ENCODE measurements at regions of chr19 and their contacts with region 1.

Region 1: DNA sequence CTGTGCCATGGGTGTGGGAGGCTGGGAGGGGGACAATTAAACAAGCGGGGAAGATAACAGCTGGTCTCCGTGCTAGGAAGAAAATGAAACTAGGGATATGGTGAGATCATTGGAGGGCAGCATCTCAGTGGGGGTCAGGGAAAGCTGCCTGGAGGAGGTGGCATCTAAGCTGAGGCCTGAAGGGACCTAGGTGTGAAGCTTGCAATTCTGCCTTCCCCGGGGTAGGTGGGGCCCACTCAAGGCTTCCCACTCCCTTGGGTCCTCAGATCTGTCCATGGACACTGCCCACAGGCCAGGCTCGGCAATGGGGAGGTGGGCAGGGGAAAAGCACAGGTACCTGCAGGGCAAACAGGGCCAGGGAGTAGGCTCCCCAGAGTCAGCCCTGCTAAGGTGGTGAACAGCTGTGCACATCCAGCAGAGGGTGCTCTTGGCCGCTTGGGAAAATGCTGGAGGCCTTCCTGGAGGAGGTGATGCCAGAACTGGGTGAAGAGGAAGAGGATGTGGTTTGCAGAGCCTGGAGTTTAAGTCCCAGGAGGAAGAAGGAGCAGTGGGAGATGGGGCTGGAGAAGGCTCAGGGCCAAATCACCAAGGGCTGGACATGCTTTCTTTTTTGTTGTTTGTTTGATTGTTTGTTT is 25.7 kb upstream of the CCNE1 start:
- DNase-seq: peak in 1 of 2 experiments; percentile 77
- H3K4me3 ChIP-seq: no peak overlapping the region
- H3K27ac ChIP-seq: no peak overlapping the region
- H3K4me1 ChIP-seq: no peaks in the 10 kb centered on the region
- H3K27me3 ChIP-seq: no peaks in the 10 kb centered on the region
- CTCF ChIP-seq: peak; percentile 72 to 86 (median 85)
- EP300 ChIP-seq: no peak
- POLR2A ChIP-seq: no peak
- RAD21 ChIP-seq: peak; percentile 74 to 80

Region 2: GRCh38 chr19:29704562-29705558 is 81.2 kb before region 1 on chr19:
- CTCF ChIA-PET with region 1: no interaction called
- POLR2A ChIA-PET with region 1: no interaction called
- DNase-seq: no peak
- H3K4me3 ChIP-seq: no peak overlapping the region
- H3K27ac ChIP-seq: no peak overlapping the region
- H3K4me1 ChIP-seq: no peaks in the 10 kb centered on the region; a peak in 1 of 7 replicates
- H3K27me3 ChIP-seq: no peaks in the 10 kb centered on the region
- CTCF ChIP-seq: no peak
- EP300 ChIP-seq: no peak
- POLR2A ChIP-seq: no peak
- RAD21 ChIP-seq: no peak

Region 3: GRCh38 chr19:29771708-29772414 is 14.2 kb before region 1 on chr19:
- CTCF ChIA-PET with region 1: interaction called, 33 read pairs
- POLR2A ChIA-PET with region 1: interaction called, 4 read pairs
- DNase-seq: peak; percentile 41 to 78
- H3K4me3 ChIP-seq: no peak overlapping the region
- H3K27ac ChIP-seq: no peak overlapping the region
- H3K4me1 ChIP-seq: peaks cover 0 to 6% (median 3%) of the 10 kb centered on the region in 4 experiments; a peak in 4 of 7 replicates
- H3K27me3 ChIP-seq: no peaks in the 10 kb centered on the region
- CTCF ChIP-seq: peak; percentile 72 to 90 (median 77)
- EP300 ChIP-seq: no peak
- POLR2A ChIP-seq: no peak
- RAD21 ChIP-seq: peak; percentile 45 to 65

Region 4: DNA sequence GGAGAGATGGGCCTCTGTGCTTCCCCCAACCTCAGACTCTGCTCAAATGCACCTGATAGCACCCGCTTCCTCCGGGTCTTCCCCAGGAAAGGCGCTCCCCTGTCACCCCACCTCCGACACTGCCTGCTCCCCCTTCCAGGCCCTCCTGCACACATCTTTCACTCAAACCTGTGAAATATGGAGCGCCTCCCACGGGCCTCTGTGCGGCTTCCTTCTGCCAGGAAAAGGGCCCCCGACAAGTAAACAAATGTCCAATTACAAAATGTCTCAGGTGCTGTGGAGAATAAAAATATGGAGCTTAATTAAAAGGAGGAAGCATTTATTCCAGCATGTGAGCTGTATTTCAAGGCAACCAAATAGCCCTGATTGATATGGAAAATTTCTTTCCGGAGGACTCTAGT is 10.1 kb after region 1 on chr19:
- CTCF ChIA-PET with region 1: interaction called, 11 read pairs
- POLR2A ChIA-PET with region 1: no interaction called
- DNase-seq: no peak
- H3K4me3 ChIP-seq: no peak overlapping the region
- H3K27ac ChIP-seq: no peak overlapping the region
- H3K4me1 ChIP-seq: no peaks in the 10 kb centered on the region
- H3K27me3 ChIP-seq: no peaks in the 10 kb centered on the region
- CTCF ChIP-seq: no peak
- EP300 ChIP-seq: no peak
- POLR2A ChIP-seq: no peak
- RAD21 ChIP-seq: no peak